AG04449 (cell line): ENCODE measurements at regions of chr14 and their contacts with region 1.

Region 1: DNA sequence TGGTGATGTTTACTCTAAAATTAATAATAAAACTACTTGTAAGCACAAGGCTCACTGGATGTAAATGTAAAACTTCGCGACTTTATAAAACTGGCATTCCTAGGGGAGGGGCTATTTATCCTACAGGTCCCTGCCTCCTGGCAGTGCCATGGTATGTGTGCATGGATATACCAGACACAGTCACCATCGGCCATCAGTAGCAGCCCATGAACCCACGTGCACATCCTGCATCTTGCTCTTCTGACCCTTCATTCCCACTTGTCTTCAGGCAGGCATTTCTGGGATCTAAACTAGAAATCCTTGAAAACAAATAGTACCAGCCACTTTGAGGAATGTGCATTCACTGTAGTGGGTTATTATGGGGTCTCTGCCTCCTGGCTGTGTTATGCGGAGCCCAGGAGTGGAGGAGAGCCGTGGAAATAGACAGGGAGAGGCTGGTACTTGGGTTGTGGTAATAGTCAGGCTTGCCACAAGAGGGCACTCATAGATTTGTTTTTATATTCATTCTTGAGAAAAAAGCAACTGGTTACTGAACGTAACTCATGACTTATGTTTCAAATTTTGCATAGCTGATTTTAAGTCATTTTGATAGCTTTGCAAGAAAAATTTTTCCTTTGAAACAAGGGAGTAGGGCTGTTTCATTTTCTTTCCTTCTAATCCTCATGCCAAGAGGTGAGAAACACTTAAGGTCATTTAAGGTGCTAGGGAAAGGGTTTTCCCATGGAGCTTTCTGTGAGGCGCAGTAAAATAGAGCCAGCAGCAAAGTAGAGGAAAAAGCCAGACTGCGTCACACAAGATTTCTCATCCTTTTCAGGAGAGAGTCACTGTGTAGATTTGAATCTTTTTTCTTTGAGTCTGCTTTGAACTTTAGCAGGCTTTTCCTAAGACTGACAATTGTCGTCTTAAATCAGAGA is 17.4 kb upstream of the GALNT16 start:
- DNase-seq: peak; percentile 14
- H3K4me3 ChIP-seq: no peak overlapping the region
- CTCF ChIP-seq: peak; percentile 45

Region 2: DNA sequence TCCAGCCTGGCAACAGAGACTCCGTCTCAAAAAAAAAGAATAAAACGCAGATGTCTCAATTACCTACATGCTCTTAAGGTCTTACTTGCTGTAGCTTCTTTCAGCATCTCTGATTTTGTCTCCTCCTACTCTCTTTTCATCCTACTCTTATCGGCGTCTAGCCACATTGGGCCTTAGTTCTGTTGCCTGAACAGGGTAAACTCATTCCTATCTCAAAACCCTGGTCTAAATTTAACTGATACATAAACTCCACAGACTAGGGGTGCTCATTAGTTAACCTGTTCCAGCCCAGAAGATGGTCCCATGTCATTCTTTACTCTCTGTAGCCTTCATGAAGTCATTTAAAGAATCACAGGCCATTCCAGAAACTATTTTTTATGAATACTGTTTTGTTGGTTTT is 17.6 kb before region 1 on chr14:
- CTCF ChIA-PET with region 1: interaction called, 23 read pairs
- POLR2A ChIA-PET with region 1: no interaction called
- DNase-seq: no peak
- H3K4me3 ChIP-seq: no peak overlapping the region
- CTCF ChIP-seq: no peak

Region 3: GRCh38 chr14:69259527-69260189 is 17.1 kb after region 1 on chr14 and contains the start of gene GALNT16:
- CTCF ChIA-PET with region 1: interaction called, 45 read pairs
- POLR2A ChIA-PET with region 1: no interaction called
- DNase-seq: no peak
- H3K4me3 ChIP-seq: peak within 1 kb of the TSS; percentile 63
- CTCF ChIP-seq: peak; percentile 35

Region 4: GRCh38 chr14:69355607-69356281 is 113.2 kb after region 1 on chr14:
- CTCF ChIA-PET with region 1: interaction called, 156 read pairs
- POLR2A ChIA-PET with region 1: no interaction called
- DNase-seq: peak; percentile 49
- H3K4me3 ChIP-seq: no peak overlapping the region
- CTCF ChIP-seq: no peak

Region 5: GRCh38 chr14:69387311-69387710 is 144.7 kb after region 1 on chr14:
- CTCF ChIA-PET with region 1: interaction called, 21 read pairs
- POLR2A ChIA-PET with region 1: no interaction called
- DNase-seq: no peak
- H3K4me3 ChIP-seq: no peak overlapping the region
- CTCF ChIP-seq: no peak

Region 6: DNA sequence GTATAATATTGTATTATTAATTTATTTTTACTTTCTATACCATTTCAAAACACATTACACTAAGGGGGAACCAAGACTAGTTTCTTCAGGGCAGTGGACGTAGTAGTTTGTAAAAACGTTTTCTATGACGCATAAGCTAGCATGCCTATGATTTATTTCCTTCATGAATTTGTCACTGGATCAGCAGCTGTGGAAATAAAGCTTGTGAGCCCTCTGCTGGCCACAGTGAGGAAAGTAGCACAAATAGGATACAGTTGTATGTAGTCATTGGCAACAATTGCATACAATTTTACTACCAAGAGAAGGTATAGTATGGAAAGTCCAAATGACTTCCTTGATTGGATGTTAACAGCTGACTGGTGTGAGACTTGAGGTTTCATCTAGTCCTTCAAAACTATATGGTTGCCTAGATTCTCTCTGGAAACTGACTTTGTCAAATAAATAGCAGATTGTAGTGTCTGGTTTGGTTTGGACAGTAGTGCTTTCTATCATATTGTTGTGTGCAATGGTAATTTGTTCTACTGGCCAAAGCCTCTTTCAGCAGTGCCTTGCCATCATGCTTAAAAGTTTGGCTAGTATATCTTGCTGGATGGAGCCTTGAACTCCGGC is 217.6 kb after region 1 on chr14:
- CTCF ChIA-PET with region 1: interaction called, 113 read pairs
- POLR2A ChIA-PET with region 1: interaction called, 3 read pairs
- DNase-seq: peak; percentile 44
- H3K4me3 ChIP-seq: no peak overlapping the region
- CTCF ChIP-seq: peak; percentile 71

Region 7: DNA sequence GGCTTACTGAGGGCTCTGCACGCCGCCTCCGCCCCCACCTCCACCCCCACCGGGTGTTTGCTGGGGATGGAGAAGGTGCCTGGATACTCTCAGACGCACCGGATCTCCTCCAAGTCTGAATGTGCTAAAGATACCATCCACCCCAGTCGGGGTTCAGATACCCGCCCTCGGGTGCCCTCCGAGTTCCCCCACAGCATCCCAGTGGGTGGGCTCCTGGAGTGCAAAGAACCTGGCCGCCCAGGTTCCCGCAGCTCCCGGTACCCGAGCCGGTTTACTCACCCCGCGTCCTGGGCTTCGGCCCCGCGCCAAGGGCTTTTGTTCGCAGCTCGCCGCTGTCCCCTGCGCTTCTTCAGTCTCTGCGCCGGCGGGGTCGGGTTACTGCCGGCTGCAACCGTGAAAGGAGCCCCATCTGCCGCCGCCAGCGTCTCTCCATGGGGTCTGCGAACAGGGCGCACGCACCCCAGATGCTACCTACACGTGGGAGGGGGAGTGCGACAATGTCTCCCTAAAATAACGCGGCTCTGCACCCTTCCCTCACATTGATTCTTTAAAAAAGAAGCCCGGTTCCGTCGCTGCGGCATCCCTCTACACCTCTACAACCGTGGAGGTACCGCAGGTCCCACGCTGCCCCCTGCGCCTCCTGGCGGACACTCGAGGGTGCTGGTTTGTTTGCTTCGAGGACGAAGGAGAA is 331.8 kb after region 1 on chr14 and contains the start of gene CCDC177:
- CTCF ChIA-PET with region 1: interaction called, 26 read pairs
- POLR2A ChIA-PET with region 1: no interaction called
- DNase-seq: no peak
- H3K4me3 ChIP-seq: peak within 1 kb of the TSS; percentile 42
- CTCF ChIP-seq: peak; percentile 90

Region 8: DNA sequence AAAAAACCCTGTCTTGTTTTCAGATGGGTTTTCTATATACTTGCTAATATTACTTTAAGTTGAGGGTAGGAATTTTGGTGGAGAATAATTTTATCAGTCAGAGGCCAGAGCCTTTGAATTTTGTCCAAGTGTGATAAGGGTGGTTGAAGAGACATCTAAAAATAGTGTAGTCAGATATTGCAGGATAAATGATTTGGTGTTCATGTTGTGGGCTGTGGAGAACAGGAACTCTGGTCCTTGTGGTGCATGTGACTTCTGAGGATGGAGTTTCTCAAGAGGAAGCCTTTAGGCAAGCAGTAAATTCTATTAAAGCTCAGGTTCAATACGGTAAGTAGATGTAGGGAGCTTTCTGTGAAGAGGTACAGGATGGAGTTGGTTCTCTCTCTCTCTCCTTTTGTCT is 1212.2 kb after region 1 on chr14:
- CTCF ChIA-PET with region 1: no interaction called
- POLR2A ChIA-PET with region 1: no interaction called
- DNase-seq: no peak
- H3K4me3 ChIP-seq: no peak overlapping the region
- CTCF ChIP-seq: no peak